Activated T-helper 1 cell treated with anti-CD3 and anti-CD28 coated beads, Interleukin-12 subunit alpha, Interleukin-12 subunit beta, Interleukin-2, Interleukin-4 antibody, amounts not matched to agents 30 ng/mL and 10 ng/mL and 1 ng/mL, durations not matched to agents 14 hours and 24 hours and 36 hours (primary cell): ENCODE measurements at regions of chr20 and their contacts with region 1.

Region 1: DNA sequence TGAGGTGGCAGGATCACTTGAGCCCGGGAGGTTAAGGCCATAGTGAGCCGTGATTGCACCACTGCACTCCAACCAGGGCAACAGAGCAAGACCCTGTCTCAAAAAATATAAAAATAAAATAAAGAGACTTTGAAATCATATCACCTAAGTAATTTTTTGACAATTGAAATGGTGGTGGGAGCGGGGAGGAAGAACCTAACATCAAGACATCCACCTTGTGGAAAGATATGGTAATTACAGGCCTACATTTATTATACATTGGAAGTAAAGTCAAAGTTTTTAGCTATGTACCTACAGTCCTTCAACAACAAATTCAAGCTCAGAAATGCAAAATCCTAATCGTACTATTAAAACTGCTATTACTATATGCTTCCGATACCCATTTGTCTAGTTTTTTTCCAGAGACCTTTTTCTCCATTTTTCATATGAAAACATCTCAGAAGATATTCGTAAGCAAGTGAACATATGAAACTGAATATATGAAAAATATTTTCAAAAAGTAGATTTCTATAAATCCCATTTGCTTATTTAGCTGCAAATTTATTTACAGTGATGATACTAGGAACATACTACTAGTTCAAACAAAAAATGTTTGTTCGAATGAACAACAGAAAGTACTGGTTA is 83.3 kb downstream of the SYCP2 start:
- DNase-seq: no peak
- H3K4me3 Mint-ChIP-seq: no peak overlapping the region
- H3K27ac Mint-ChIP-seq: no peak overlapping the region
- H3K4me1 Mint-ChIP-seq: no peaks in the 10 kb centered on the region
- H3K27me3 Mint-ChIP-seq: peaks cover 2% of the 10 kb centered on the region

Region 2: DNA sequence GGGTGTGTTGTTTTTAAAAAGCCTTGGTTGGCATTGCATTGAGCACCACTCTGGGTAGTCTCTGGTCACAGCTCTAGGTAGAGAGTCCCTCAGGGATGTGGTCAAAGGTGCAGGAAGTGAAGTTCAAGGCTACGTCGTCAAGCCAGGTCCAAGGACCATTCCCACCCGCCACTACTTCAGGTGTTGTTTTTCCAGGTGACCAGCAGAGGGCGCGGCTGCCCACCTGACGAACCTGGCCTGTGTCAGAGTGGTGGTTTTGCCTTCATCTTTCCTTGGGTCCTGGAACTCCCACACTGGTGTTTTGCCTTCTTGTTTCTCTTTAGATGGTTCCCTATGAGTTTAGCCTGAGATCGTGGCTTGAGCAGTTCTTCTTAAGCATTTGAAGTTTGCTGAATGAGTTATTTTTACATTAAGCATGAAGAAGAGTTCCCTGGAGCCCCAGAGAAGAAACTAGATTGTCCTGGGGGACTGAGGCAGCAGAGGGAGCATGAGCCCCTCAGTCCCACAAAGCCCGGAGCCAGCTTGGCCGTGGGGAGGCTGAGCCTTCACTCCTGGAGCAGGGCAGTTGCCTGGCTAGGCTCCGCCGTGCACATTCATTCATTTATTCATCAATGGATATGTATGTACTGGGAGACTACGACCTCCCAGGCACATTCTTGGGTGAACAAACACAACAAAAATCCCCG is 251.4 kb before region 1 on chr20:
- intact Hi-C with region 1: loop called (anchors 2 kb)
- DNase-seq: no peak
- H3K4me3 Mint-ChIP-seq: no peak overlapping the region
- H3K27ac Mint-ChIP-seq: no peak overlapping the region
- H3K4me1 Mint-ChIP-seq: no peaks in the 10 kb centered on the region
- H3K27me3 Mint-ChIP-seq: peaks cover 35% of the 10 kb centered on the region

Region 3: DNA sequence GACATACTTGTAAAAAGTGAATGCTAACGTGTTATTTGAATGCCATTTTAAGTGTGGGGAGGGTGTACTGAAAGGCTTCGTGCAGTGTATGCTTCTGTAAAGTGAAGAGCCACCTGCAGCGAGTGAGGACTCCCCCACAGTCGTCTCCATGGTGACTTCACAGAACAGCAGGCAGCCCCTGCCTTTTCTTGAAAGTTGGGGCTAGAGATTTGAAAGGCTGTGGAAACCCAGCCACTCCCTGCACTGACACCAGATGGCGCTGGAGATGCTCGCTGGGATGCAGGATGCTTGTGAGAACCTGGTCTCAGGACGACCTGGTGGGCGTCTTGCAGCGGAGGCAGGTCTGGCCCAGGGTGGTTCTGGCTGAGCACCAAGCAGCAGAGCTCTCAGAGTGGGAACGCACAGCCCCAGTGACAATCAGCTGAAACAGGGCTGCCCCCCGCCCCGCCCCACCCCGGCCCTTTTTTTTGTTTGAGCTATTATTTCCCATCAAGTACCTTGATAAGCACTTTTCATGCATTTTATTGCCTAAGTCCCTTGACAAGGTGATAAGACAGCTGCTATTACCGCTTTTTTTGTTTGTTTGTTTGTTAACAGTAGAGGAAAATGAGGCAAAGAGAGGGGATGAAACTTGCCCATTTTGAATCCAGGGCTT is 67.0 kb before region 1 on chr20:
- intact Hi-C with region 1: loop called (anchors 1 kb)
- DNase-seq: no peak
- H3K4me3 Mint-ChIP-seq: no peak overlapping the region
- H3K27ac Mint-ChIP-seq: no peak overlapping the region
- H3K4me1 Mint-ChIP-seq: no peaks in the 10 kb centered on the region
- H3K27me3 Mint-ChIP-seq: no peaks in the 10 kb centered on the region